Aorta (tissue), 5 donors: ENCODE measurements at regions of chr19 and their contacts with region 1.

Region 1: GRCh38 chr19:56748378-56748777 is 76.8 kb upstream of the ZNF835 start:
- DNase-seq: no peak
- ATAC-seq: no peak
- H3K4me3 ChIP-seq: no peak overlapping the region
- H3K27ac ChIP-seq: no peak overlapping the region
- H3K4me1 ChIP-seq: no peaks in the 10 kb centered on the region
- H3K27me3 ChIP-seq: no peaks in the 10 kb centered on the region

Region 2: GRCh38 chr19:56637976-56638555 is 110.3 kb before region 1 on chr19:
- intact Hi-C with region 1: no loop called
- DNase-seq: peak; percentile 73 to 84
- ATAC-seq: peak; percentile 66
- H3K4me3 ChIP-seq: no peak overlapping the region
- H3K27ac ChIP-seq: no peak overlapping the region
- H3K4me1 ChIP-seq: no peaks in the 10 kb centered on the region
- H3K27me3 ChIP-seq: no peaks in the 10 kb centered on the region

Region 3: GRCh38 chr19:57103573-57104277 is 355.3 kb after region 1 on chr19:
- intact Hi-C with region 1: loop called in 1 of 2 experiments (anchors 10 kb)
- DNase-seq: peak in 1 of 2 donors; percentile 60
- ATAC-seq: peak; percentile 75
- H3K4me3 ChIP-seq: no peak overlapping the region
- H3K27ac ChIP-seq: no peak overlapping the region
- H3K4me1 ChIP-seq: no peaks in the 10 kb centered on the region
- H3K27me3 ChIP-seq: peaks cover 0 to 2% of the 10 kb centered on the region in 2 donors